ENCODE measurements at regions of chr4 and their contacts with region 1.

Region 1: DNA sequence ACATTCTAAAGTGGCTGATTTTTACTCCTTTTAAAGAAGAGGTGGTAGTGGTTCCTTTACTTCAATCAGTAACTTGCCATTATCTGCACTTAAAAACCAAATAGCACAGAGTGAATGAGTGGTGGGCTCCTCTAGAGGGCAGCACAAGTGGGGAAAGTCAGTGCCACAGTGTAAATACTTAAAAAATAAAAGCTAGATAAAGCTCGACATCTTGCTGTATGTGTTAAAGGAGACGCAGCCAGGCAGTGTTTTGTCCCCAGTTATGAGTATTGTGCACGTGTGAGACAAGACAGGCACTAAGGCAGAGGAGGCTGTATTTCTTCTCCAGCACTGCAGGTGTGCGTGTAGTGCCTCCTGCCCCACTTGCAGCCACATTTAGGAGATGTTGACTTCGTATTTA is 24.6 kb downstream of the NAP1L5 start:
- DNase-seq: peak; percentile 51
- ATAC-seq: peak; percentile 77
- H3K4me3 Mint-ChIP-seq: no peak overlapping the region
- H3K27ac Mint-ChIP-seq: no peak overlapping the region
- H3K4me1 Mint-ChIP-seq: peaks cover 9% of the 10 kb centered on the region
- H3K27me3 Mint-ChIP-seq: no peaks in the 10 kb centered on the region

Region 2: DNA sequence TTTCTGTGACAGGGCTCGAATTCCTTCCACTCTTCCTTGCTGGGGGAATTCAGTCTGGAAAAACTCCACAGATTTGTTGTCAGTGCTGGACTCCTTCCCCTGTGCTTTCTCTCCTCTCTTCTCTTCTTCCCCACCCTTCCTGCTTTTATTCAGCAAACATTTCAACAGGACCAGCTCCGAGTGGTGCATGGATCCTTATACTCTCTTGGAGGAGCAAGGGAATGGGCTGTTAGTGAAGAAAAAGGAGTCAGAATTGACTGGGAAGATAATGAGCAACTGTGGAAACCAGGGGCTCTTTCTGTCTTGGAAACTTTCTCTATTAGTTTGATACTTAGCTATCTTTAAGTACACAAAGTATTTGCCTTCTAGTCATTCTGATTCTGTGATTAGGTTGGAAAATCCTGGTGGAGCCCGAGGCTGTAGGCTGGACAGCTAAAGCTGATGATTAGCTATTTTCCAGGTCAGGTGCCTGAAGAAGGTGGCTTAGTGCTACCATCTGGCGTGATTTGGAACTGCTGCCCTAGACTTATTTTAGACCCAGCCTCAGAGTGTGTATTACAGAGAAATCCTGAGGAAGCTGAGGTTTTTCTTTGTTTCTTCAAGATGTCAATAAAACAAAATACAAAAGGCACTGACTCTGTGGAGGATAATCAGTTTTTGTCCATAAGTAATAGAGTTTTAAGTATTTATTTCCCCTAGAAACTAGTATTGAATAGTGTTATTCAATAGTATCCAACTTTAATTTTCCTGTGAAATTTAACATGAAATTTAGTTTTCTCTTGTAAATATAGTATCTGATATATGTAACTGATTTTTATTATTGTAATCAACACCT is 13.7 kb before region 1 on chr4:
- CTCF ChIA-PET with region 1: interaction called, 11 read pairs
- POLR2A ChIA-PET with region 1: no interaction called
- intact Hi-C with region 1: no loop called
- DNase-seq: peak; percentile 54
- ATAC-seq: peak; percentile 81
- H3K4me3 Mint-ChIP-seq: no peak overlapping the region
- H3K27ac Mint-ChIP-seq: no peak overlapping the region
- H3K4me1 Mint-ChIP-seq: peaks cover 7% of the 10 kb centered on the region
- H3K27me3 Mint-ChIP-seq: no peaks in the 10 kb centered on the region

Region 3: GRCh38 chr4:88792268-88792781 is 119.3 kb after region 1 on chr4:
- CTCF ChIA-PET with region 1: no interaction called
- POLR2A ChIA-PET with region 1: no interaction called
- intact Hi-C with region 1: loop called in 1 of 2 experiments (anchors 5 kb)
- DNase-seq: no peak
- ATAC-seq: peak; percentile 88
- H3K4me3 Mint-ChIP-seq: no peak overlapping the region
- H3K27ac Mint-ChIP-seq: no peak overlapping the region
- H3K4me1 Mint-ChIP-seq: peaks cover 18% of the 10 kb centered on the region
- H3K27me3 Mint-ChIP-seq: no peaks in the 10 kb centered on the region

Region 4: DNA sequence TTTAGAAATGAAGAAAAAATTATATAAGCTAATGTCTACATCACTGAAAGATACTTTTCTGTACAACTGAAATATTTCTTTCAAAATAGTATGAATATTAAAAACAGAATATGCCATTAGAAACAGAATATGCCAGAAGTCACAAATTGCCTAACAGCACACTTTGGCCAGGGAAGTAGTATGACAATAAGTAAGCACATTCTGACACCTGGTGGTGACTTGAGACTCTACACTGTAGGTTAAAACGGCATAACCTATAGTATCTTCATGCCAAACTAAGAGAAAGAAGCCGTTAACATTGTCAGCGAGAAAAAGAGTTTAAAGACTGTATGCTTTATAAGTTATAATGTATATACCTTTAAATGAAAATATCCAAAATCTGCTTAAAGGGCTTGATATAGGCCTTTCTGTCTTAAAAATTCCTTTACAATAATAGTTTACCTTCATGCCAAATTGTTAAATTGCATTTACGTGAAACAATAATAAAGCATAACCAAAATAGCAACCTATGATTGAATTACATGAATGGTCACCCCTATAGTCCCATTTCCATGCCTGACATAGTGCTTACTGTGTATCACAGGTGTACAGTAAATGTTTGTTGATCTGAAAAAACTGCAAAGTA is 351.2 kb after region 1 on chr4:
- CTCF ChIA-PET with region 1: interaction called, 6 read pairs
- POLR2A ChIA-PET with region 1: no interaction called
- intact Hi-C with region 1: loop called (anchors 2 kb)
- DNase-seq: peak; percentile 58
- ATAC-seq: peak; percentile 91
- H3K4me3 Mint-ChIP-seq: no peak overlapping the region
- H3K27ac Mint-ChIP-seq: no peak overlapping the region
- H3K4me1 Mint-ChIP-seq: peaks cover 4% of the 10 kb centered on the region
- H3K27me3 Mint-ChIP-seq: peaks cover 2% of the 10 kb centered on the region